ENCODE measurements at regions of chr3 and their contacts with region 1.

Region 1: DNA sequence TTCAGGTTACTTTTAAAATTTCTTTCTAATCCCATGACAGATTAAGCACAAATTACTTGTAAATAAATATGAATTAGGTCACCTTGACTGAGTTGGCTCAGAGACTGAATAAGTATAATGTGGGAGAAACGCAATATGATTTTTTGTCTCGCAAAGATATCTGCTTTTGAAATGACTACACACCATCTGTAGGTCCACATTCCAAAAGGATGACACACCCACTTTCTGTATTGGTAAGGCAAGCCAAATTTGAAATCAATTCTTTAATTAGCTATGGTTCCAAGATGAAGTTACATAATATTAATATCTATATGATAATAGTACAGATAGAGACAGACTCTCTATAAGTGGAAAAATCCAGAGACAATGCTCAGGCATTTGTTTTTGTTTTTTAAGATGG is 66.9 kb upstream of the CSPG5 start:
- DNase-seq: no peak
- H3K4me3 Mint-ChIP-seq: no peak overlapping the region
- H3K27ac Mint-ChIP-seq: no peak overlapping the region
- H3K4me1 Mint-ChIP-seq: no peaks in the 10 kb centered on the region
- H3K27me3 Mint-ChIP-seq: no peaks in the 10 kb centered on the region

Region 2: GRCh38 chr3:47440131-47440530 is 205.4 kb before region 1 on chr3:
- intact Hi-C with region 1: no loop called
- DNase-seq: no peak
- H3K4me3 Mint-ChIP-seq: no peak overlapping the region
- H3K27ac Mint-ChIP-seq: no peak overlapping the region
- H3K4me1 Mint-ChIP-seq: peaks cover 6% of the 10 kb centered on the region
- H3K27me3 Mint-ChIP-seq: no peaks in the 10 kb centered on the region

Region 3: DNA sequence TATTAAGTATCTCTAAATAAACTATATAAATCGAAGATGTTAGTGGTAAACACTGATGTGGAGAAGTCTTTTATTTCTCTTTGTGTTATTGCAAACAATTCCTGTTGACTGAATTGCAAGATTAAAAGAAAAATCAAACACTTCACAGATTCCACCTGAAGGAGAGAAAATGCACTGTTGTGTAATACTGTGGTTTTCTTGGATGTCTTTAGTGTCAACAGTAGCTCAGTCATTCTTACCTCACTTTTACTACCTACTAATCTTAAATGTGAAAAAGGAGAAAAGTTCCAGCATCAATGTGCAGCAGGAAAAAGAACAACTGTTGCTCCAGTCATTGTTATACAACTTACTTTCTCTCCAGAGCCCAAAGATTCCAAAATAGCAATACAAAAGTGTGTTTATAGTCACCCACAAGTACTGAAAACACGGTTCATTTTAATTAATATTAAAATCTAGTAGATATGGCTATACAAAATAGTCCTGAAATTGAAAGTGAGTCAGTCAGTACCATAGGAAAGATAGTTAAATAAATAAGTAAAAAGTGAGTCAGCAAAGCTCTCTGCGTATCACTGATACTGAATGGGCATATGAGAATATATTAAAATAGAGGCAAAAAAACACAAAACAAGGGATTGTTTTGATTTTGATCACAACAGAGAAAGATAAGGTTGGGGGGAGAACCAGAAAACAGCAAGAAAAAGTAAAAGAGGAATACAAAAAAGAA is 23.6 kb after region 1 on chr3:
- intact Hi-C with region 1: loop called (anchors 1 kb)
- DNase-seq: no peak
- H3K4me3 Mint-ChIP-seq: no peak overlapping the region
- H3K27ac Mint-ChIP-seq: no peak overlapping the region
- H3K4me1 Mint-ChIP-seq: no peaks in the 10 kb centered on the region
- H3K27me3 Mint-ChIP-seq: no peaks in the 10 kb centered on the region

Measured in activated T-helper 1 cell treated with anti-CD3 and anti-CD28 coated beads, Interleukin-12 subunit alpha, Interleukin-12 subunit beta, Interleukin-2, Interleukin-4 antibody, amounts not matched to agents 30 ng/mL and 10 ng/mL and 1 ng/mL, durations not matched to agents 14 hours and 24 hours and 36 hours (primary cell).